IMR-90 (cell line): ENCODE measurements at regions of chr4 and their contacts with region 1.

Region 1: GRCh38 chr4:151117371-151117962 is 18.0 kb downstream of the RPS3A start:
- DNase-seq: peak; percentile 69
- ATAC-seq: peak; percentile 89
- H3K4me3 ChIP-seq: no peak overlapping the region
- H3K27ac ChIP-seq: no peak overlapping the region
- H3K4me1 ChIP-seq: peaks cover 6% of the 10 kb centered on the region
- H3K27me3 ChIP-seq: no peaks in the 10 kb centered on the region
- CTCF ChIP-seq: peak; percentile 87
- POLR2A ChIP-seq: no peak
- RAD21 ChIP-seq: peak; percentile 84

Region 2: GRCh38 chr4:151604238-151604637 is 486.8 kb after region 1 on chr4:
- CTCF ChIA-PET with region 1: no interaction called
- POLR2A ChIA-PET with region 1: no interaction called
- dilution Hi-C with region 1: no loop called
- in situ Hi-C with region 1: loop called (anchors 25 kb)
- intact Hi-C with region 1: loop called (anchors 2 kb)
- DNase-seq: peak; percentile 32
- ATAC-seq: peak; percentile 72
- H3K4me3 ChIP-seq: no peak overlapping the region
- H3K27ac ChIP-seq: no peak overlapping the region
- H3K4me1 ChIP-seq: peaks cover 3% of the 10 kb centered on the region; the same call in 1 of the 2 replicates
- H3K27me3 ChIP-seq: peaks cover 6% of the 10 kb centered on the region
- CTCF ChIP-seq: peak; percentile 57
- POLR2A ChIP-seq: no peak
- RAD21 ChIP-seq: peak; percentile 54

Region 3: GRCh38 chr4:151611960-151612359 is 494.5 kb after region 1 on chr4:
- CTCF ChIA-PET with region 1: no interaction called
- POLR2A ChIA-PET with region 1: no interaction called
- dilution Hi-C with region 1: no loop called
- in situ Hi-C with region 1: loop called (anchors 25 kb)
- intact Hi-C with region 1: loop called (anchors 1 kb)
- DNase-seq: no peak
- ATAC-seq: no peak
- H3K4me3 ChIP-seq: no peak overlapping the region
- H3K27ac ChIP-seq: no peak overlapping the region
- H3K4me1 ChIP-seq: no peaks in the 10 kb centered on the region
- H3K27me3 ChIP-seq: peaks cover 3% of the 10 kb centered on the region
- CTCF ChIP-seq: no peak
- POLR2A ChIP-seq: no peak
- RAD21 ChIP-seq: no peak

Region 4: GRCh38 chr4:151997461-151997860 is 880.0 kb after region 1 on chr4:
- CTCF ChIA-PET with region 1: no interaction called
- POLR2A ChIA-PET with region 1: no interaction called
- dilution Hi-C with region 1: no loop called
- in situ Hi-C with region 1: no loop called
- intact Hi-C with region 1: no loop called
- DNase-seq: no peak
- ATAC-seq: no peak
- H3K4me3 ChIP-seq: no peak overlapping the region
- H3K27ac ChIP-seq: no peak overlapping the region
- H3K4me1 ChIP-seq: no peaks in the 10 kb centered on the region
- H3K27me3 ChIP-seq: no peaks in the 10 kb centered on the region; the same call in none of the 2 replicates
- CTCF ChIP-seq: no peak
- POLR2A ChIP-seq: no peak
- RAD21 ChIP-seq: no peak

Region 5: DNA sequence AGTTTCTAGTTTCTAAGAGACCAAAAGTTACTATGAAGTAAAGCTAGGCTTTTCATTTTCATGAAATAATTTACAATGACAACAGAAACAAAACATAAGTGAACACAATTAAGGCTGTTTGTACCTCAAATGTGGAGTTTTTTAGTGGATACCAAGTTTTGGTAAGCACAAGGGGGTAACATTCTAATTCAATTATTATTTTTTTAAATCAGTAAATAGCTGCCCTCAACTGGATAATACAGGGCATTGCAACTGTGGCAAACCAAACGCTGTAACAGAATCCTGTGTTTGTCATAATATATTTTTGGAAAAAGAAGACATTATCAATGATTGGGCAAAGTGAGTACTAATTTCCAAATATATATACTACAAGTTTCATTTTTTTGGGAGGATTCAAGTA is 1268.1 kb after region 1 on chr4:
- CTCF ChIA-PET with region 1: no interaction called
- POLR2A ChIA-PET with region 1: no interaction called
- dilution Hi-C with region 1: no loop called
- in situ Hi-C with region 1: loop called (anchors 25 kb)
- intact Hi-C with region 1: no loop called
- DNase-seq: peak; percentile 31
- ATAC-seq: peak; percentile 80
- H3K4me3 ChIP-seq: no peak overlapping the region
- H3K27ac ChIP-seq: no peak overlapping the region
- H3K4me1 ChIP-seq: no peaks in the 10 kb centered on the region; the same call in 1 of the 2 replicates
- H3K27me3 ChIP-seq: no peaks in the 10 kb centered on the region
- CTCF ChIP-seq: peak; percentile 59
- POLR2A ChIP-seq: no peak
- RAD21 ChIP-seq: peak; percentile 54